Adrenal gland (tissue), 19 donors: ENCODE measurements at regions of chr20 and their contacts with region 1.

Region 1: DNA sequence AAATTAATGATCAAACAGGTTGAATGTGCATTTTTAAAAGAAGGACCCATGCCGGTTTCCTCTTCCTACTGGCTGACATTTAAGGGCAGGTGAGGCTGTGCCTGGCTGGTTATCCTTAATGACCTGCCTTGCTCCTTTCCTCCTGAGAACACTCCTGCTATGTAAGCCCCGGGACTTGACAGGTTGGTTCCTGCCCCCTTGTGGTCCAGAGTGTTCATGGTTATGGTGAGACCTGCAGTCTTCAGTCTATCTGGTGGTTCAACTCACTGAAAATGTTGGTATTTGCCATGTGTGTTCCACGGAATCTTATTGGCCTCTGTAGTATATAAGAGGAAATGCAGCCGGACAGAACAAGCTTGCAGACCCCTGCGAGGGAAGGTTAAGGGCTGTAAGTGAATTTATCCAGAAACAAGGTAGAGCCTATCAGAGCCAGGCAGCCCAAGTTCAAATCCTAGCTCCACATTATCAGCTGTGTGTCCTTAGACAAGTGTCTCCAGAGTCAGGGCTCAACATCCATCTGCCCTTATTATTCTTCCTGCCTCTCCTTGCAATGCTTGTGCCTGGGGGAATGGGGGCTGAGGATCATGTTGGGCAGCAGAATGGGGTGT is 5.2 kb upstream of the BPIFA3 start:
- DNase-seq: peak; percentile 14 to 72 (median 54)
- H3K4me3 ChIP-seq: no peak overlapping the region
- H3K27ac ChIP-seq: no peak overlapping the region
- H3K4me1 ChIP-seq: no peaks in the 10 kb centered on the region
- H3K27me3 ChIP-seq: no peaks in the 10 kb centered on the region
- CTCF ChIP-seq: peak in 5 of 6 experiments; percentile 21 to 41 (median 26)
- POLR2A ChIP-seq: no peak

Region 2: GRCh38 chr20:32908334-32909292 is 303.3 kb before region 1 on chr20:
- intact Hi-C with region 1: loop called in 1 of 2 experiments (anchors 5 kb)
- DNase-seq: no peak
- H3K4me3 ChIP-seq: no peak overlapping the region
- H3K27ac ChIP-seq: no peak overlapping the region
- H3K4me1 ChIP-seq: no peaks in the 10 kb centered on the region
- H3K27me3 ChIP-seq: peaks cover 3% of the 10 kb centered on the region
- CTCF ChIP-seq: no peak
- POLR2A ChIP-seq: no peak